GM13976 (cell line): ENCODE measurements at regions of chr18 and their contacts with region 1.

Region 1: DNA sequence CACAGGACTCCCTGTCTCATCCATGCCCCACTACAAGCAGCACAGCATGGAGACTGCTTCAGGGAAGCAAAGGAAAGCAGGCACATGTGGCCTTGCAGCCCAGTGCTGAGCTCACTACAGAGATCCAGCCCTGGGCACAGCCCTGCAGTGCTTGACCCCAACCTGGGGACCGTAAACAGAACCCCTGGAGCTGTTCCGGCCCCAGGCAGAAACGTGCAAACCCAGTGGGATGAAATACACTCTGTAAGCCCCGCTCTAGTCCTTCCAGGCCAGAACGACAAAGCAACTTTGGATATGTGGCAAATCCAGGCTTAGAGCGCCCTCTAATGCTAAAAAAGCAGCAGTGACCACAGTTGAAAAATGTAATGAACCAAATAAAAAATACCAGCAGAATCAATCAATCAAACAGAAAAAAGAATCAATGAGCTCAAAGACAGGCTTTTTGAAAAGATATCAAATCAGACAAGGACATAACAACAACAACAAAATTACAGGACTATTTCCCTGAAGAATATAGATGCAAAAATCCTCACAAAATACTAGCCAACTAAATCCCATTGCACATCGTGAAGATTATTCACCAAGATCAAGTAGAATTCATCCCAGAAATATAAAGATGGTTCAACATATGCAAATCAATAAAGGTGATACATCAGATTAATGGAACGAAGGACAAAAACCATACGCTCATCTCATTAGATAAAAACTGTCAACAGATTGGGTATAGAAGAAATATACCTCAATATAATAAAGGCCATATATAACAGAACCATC is 45.6 kb downstream of the ZNF519 start:
- DNase-seq: peak; percentile 57
- CTCF ChIP-seq: peak; percentile 62

Region 2: GRCh38 chr18:13823707-13824395 is 262.8 kb before region 1 on chr18 and contains the start of gene MC5R:
- in situ Hi-C with region 1: loop called (anchors 5 kb)
- DNase-seq: peak; percentile 94
- CTCF ChIP-seq: peak; percentile 99

Region 3: DNA sequence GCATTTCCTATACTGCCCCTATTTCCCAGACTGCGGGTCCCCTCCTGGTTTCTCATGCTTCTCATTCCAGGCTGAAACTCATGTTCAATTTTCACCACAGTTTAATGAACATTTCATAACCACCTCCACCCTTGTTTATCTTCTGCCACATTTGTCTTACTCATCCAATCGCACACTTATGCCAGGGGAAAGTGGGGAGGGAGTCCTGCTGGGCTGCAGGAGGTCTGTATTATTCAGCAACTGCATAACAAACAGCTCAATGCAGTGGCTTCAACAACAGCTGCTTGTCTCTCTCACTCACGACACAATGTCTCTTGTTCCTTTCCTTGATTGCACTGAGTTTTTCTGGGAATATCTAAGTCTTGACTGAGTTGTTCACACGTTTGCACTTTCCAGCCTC is 60.4 kb before region 1 on chr18:
- in situ Hi-C with region 1: loop called (anchors 10 kb)
- DNase-seq: no peak
- CTCF ChIP-seq: no peak